Dendritic cell treated with granulocyte-macrophage colony-stimulating factor and Interleukin-4, amounts not matched to agents 40 ng/mL and 50 ng/mL, for 4 days (primary cell): ENCODE measurements at regions of chr22 and their contacts with region 1.

Region 1: DNA sequence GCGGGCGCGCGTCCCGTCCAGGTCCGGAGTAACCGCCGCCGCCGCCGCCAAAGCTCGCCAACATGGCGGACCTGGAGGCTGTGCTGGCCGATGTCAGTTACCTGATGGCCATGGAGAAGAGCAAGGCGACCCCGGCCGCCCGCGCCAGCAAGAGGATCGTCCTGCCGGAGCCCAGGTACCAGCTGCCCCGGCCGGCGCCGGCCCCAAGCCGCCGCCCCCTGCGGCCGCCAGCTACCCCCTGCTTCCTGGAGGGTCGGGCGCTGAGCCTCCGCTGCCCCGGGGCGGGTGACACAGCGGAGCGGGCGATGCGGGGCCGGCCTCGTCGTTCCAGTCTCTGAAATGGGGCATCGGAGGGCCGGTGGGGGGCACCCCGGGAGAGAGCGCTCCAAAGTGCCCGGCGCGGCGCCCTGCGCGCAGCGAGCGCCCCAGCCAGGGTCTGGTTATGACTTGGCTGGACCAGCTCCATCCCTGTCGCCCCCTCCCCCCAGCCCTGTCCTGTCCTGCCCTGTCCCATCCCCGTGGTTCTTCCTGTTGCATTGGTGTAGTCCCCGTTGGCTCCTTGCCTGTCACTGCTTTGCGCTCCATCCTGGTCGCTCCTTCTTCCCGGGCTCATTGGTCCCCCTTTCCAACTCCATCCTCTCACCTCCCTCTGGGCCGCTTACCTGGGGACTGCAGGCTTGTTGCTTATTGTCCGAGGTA is 653 bp downstream of the GRK3 start:
- H3K4me3 Mint-ChIP-seq: peak overlapping the region; percentile 94
- H3K27ac Mint-ChIP-seq: peak overlapping the region; percentile 94
- H3K4me1 Mint-ChIP-seq: peaks cover 39% of the 10 kb centered on the region
- H3K27me3 Mint-ChIP-seq: no peaks in the 10 kb centered on the region

Region 2: GRCh38 chr22:25598609-25599008 is 33.5 kb after region 1 on chr22:
- intact Hi-C with region 1: no loop called
- H3K4me3 Mint-ChIP-seq: no peak overlapping the region
- H3K27ac Mint-ChIP-seq: no peak overlapping the region
- H3K4me1 Mint-ChIP-seq: peaks cover 59% of the 10 kb centered on the region
- H3K27me3 Mint-ChIP-seq: no peaks in the 10 kb centered on the region

Region 3: DNA sequence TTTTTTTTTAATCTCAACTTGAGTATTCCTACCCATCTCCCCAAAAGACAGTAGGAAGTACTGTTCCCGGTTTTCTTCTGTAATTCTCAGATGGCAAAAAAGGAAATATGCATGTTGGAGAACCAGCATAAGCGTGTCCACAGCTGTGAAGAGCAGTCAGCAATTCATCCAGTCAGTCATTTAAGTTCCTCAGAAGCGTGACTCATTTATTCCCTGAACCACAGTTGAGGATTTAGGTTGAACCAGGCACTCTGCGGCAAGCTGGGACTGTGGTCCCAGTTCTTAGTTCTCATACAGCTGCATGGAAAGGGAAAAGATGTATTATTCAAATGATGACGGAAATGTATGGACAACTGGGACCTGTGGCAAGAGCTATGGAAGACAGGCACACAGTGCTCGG is 115.8 kb after region 1 on chr22:
- intact Hi-C with region 1: loop called (anchors 5 kb)
- H3K4me3 Mint-ChIP-seq: peak overlapping the region; percentile 61
- H3K27ac Mint-ChIP-seq: peak overlapping the region; percentile 94
- H3K4me1 Mint-ChIP-seq: peaks cover 47% of the 10 kb centered on the region
- H3K27me3 Mint-ChIP-seq: no peaks in the 10 kb centered on the region